ENCODE measurements at regions of chr12 and their contacts with region 1.

Region 1: DNA sequence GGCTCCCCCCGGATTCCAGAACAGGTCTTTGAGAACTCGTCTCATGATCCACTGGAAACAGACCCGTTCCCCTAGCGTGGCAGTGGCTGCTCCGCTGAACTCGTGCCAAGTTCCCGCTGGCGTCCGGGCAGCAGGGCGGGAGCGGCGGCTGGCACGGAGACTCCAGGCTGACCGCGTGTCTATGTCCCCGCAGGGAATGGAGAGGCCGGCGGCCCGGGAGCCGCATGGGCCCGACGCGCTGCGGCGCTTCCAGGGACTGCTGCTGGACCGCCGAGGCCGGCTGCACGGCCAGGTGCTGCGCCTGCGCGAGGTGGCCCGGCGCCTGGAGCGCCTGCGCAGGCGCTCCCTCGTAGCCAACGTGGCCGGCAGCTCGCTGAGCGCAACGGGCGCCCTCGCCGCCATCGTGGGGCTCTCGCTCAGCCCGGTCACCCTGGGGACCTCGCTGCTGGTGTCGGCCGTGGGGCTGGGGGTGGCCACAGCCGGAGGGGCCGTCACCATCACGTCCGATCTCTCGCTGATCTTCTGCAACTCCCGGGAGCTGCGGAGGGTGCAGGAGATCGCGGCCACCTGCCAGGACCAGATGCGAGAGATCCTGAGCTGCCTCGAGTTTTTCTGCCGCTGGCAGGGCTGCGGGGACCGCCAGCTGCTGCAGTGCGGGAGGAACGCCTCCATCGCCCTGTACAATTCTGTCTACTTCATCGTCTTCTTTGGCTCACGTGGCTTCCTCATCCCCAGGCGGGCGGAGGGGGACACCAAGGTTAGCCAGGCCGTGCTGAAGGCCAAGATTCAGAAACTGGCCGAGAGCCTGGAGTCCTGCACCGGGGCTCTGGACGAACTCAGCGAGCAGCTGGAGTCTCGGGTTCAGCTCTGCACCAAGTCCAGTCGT is 1.5 kb downstream of the APOLD1 start:
- DNase-seq: peak; percentile 47 to 90 (median 71)
- ATAC-seq: peak; percentile 90
- H3K4me3 ChIP-seq: peak overlapping the region; percentile 68 to 70
- H3K4me3 Mint-ChIP-seq: peak overlapping the region; percentile 77
- H3K27ac ChIP-seq: peak overlapping the region; percentile 72 to 73
- H3K27ac Mint-ChIP-seq: peak overlapping the region; percentile 87
- H3K4me1 ChIP-seq: peaks cover 16% of the 10 kb centered on the region
- H3K4me1 Mint-ChIP-seq: peaks cover 22% of the 10 kb centered on the region
- H3K27me3 ChIP-seq: no peaks in the 10 kb centered on the region
- H3K27me3 Mint-ChIP-seq: no peaks in the 10 kb centered on the region
- CTCF ChIP-seq: no peak

Region 2: DNA sequence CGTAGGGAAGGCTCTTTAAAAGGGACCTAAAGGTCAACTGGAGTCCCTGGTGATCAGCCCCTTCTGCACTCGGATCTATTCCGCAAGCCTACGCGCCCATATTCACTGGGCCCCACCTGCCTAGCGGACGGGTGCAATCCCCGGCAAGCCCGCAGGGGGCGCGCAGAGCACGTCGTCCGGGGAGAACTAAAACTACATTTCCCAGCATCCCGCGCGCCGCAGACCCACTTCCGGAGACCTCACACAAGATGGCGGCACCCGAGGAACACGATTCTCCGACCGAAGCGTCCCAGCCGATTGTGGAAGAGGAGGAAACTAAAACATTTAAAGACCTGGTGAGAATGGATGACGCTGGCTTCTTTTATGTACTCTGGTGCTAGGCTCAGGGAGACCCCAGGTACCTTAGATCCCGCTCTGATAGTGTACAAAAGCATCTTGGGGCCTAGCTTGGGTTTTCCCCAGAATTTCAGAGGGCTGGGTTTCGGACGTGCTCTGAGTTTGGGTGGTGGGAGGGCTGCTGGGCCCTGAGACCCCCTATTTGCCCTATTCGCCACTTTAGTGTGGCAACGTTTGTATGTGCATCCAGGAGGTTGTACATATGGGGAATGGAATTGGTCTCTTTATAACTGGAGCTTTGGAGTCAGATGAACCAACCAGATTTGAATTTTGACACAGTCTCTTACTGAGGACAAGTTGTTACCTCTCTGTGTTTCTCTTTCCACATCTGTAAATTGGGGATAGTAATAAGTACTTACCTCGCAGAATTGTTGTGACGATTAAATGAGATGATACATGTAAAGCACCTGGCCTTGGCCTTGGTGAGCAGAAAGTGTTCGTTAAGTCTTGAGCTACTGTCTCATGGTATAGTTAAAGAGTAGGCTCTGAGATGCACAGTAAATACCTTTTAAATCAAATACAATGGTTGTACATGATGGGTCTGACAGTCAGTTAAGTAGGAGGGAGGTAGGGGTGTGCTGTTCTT is 26.5 kb after region 1 on chr12 and contains the start of gene DDX47:
- CTCF ChIA-PET with region 1: interaction called, 91 read pairs
- POLR2A ChIA-PET with region 1: interaction called, 37 read pairs
- intact Hi-C with region 1: loop called (anchors 1 kb)
- DNase-seq: peak; percentile 94 to 99 (median 96)
- ATAC-seq: peak; percentile 88
- H3K4me3 ChIP-seq: peak within 1 kb of the TSS; percentile 88 to 98
- H3K4me3 Mint-ChIP-seq: peak within 1 kb of the TSS; percentile 95
- H3K27ac ChIP-seq: peak within 1 kb of the TSS; percentile 78 to 91
- H3K27ac Mint-ChIP-seq: peak within 1 kb of the TSS; percentile 96
- H3K4me1 ChIP-seq: peaks cover 34% of the 10 kb centered on the region
- H3K4me1 Mint-ChIP-seq: peaks cover 65% of the 10 kb centered on the region
- H3K27me3 ChIP-seq: no peaks in the 10 kb centered on the region
- H3K27me3 Mint-ChIP-seq: no peaks in the 10 kb centered on the region
- CTCF ChIP-seq: peak; percentile 93
- total RNA-seq, gene DDX47: 173 to 174 TPM

Region 3: DNA sequence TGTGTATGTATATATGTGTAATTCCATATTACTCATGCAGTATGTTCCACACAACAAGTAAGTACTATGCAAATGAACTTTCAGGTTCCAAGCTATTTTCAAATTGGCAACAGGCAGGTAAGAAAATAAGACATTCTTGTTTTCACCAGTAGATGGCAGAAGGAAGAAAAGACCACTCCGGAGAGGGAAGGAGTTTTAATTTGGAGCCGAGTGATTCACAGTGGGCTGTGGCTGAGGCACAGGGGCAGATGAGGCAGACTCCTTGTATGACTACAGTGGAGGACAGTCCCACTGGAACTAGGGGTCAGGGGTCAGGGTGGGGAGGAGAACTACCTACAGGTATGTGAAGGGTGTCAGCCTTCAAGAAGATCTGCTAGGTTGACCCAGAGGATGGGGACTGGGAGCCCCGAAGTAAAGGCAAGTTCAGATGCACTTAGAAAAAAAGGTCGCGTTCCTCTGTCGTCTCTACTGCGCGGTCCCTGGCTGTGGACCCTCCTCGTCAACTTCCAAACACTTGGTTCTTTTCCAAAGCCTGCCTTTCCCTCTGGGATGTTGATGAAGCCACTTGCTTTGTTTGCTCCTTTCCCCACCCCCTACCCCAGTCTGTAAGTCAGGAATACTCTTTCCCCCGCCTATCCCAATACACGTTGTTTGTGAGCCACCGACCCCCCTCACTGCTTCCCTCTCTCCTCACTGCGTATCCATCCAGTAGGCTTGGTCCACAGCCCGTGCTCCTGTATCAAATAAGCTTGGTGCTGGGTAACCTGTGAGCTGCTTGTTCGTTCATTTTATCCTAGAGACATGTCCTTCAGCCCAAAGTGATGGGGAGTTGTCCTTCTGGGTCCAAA is 50.3 kb after region 1 on chr12:
- CTCF ChIA-PET with region 1: interaction called, 22 read pairs
- POLR2A ChIA-PET with region 1: no interaction called
- intact Hi-C with region 1: no loop called
- DNase-seq: peak in 5 of 9 experiments; percentile 7 to 62 (median 25)
- ATAC-seq: peak; percentile 84
- H3K4me3 ChIP-seq: no peak overlapping the region
- H3K4me3 Mint-ChIP-seq: no peak overlapping the region
- H3K27ac ChIP-seq: no peak overlapping the region
- H3K27ac Mint-ChIP-seq: no peak overlapping the region
- H3K4me1 ChIP-seq: no peaks in the 10 kb centered on the region
- H3K4me1 Mint-ChIP-seq: peaks cover 23% of the 10 kb centered on the region
- H3K27me3 ChIP-seq: no peaks in the 10 kb centered on the region
- H3K27me3 Mint-ChIP-seq: no peaks in the 10 kb centered on the region
- CTCF ChIP-seq: peak; percentile 66

Region 4: GRCh38 chr12:12916135-12916944 is 129.4 kb after region 1 on chr12:
- CTCF ChIA-PET with region 1: interaction called, 9 read pairs
- POLR2A ChIA-PET with region 1: no interaction called
- intact Hi-C with region 1: loop called (anchors 2 to 5 kb)
- DNase-seq: peak; percentile 72 to 92 (median 82)
- ATAC-seq: peak; percentile 99
- H3K4me3 ChIP-seq: no peak overlapping the region
- H3K4me3 Mint-ChIP-seq: peak overlapping the region; percentile 4
- H3K27ac ChIP-seq: no peak overlapping the region
- H3K27ac Mint-ChIP-seq: no peak overlapping the region
- H3K4me1 ChIP-seq: peaks cover 4% of the 10 kb centered on the region
- H3K4me1 Mint-ChIP-seq: peaks cover 9% of the 10 kb centered on the region
- H3K27me3 ChIP-seq: peaks cover 0 to 7% of the 10 kb centered on the region in 2 experiments
- H3K27me3 Mint-ChIP-seq: peaks cover 19% of the 10 kb centered on the region
- CTCF ChIP-seq: peak; percentile 82

Region 5: GRCh38 chr12:12999959-13000615 is 213.1 kb after region 1 on chr12 and contains the start of gene HEBP1:
- CTCF ChIA-PET with region 1: interaction called, 3 read pairs
- POLR2A ChIA-PET with region 1: no interaction called
- intact Hi-C with region 1: loop called in 1 of 2 experiments (anchors 5 kb)
- DNase-seq: peak; percentile 90 to 98 (median 96)
- ATAC-seq: peak; percentile 95
- H3K4me3 ChIP-seq: peak within 1 kb of the TSS; percentile 84 to 85
- H3K4me3 Mint-ChIP-seq: peak within 1 kb of the TSS; percentile 96
- H3K27ac ChIP-seq: peak within 1 kb of the TSS; percentile 41 to 55
- H3K27ac Mint-ChIP-seq: peak within 1 kb of the TSS; percentile 82
- H3K4me1 ChIP-seq: peaks cover 20% of the 10 kb centered on the region
- H3K4me1 Mint-ChIP-seq: peaks cover 29% of the 10 kb centered on the region
- H3K27me3 ChIP-seq: peaks cover 0 to 4% of the 10 kb centered on the region in 2 experiments
- H3K27me3 Mint-ChIP-seq: peaks cover 6% of the 10 kb centered on the region
- CTCF ChIP-seq: no peak
- total RNA-seq, gene HEBP1: 4.6 to 5.6 TPM

Region 6: DNA sequence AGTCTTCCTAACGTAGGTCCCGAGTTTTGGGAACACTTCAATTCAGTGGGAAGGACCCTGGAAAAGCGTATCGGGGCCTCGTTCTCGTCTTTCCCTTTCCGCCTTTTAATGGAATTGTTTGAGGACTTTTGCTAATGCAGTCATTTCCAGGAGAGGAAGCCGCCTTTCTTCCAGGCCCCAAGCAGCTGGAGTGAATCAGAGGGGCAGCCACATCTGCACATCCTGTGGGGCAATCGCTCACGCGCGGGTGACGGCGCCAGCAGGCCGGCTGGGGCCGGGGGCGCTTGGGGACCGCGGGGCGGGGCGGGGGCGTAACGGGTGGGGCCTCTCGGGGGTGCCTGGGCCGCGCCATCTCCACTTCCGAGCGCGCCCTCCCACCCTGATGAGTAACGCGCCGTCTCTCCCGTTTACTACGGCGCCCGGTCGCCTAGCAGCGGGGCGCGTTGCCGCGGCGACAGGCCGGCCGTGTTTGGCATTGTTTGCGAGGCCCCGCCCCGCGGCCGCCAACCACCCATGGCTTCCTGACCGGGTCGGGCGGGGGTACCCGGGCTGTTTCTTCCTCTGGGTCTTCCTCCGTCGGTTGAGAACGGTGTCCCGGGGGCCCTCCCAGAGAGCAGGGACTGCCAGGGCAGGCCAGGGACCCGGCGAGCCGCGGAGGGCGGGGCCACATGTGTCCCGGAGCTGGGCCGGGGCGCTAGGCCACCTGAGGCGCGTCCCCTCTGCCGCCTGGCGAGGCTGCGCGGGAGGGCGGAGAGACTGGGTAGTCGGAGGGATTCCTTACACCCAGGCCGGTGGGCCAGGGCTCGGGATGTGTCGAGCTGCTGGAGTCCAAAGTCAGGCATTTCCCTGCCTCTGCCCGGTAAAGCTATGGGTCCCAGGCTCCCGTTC is 314.2 kb after region 1 on chr12:
- CTCF ChIA-PET with region 1: interaction called, 3 read pairs
- POLR2A ChIA-PET with region 1: no interaction called
- intact Hi-C with region 1: loop called (anchors 1 to 5 kb)
- DNase-seq: peak; percentile 86 to 97 (median 93)
- ATAC-seq: peak; percentile 87
- H3K4me3 ChIP-seq: peak overlapping the region; percentile 55 to 77
- H3K4me3 Mint-ChIP-seq: peak overlapping the region; percentile 81
- H3K27ac ChIP-seq: peak overlapping the region; percentile 83 to 95
- H3K27ac Mint-ChIP-seq: peak overlapping the region; percentile 89
- H3K4me1 ChIP-seq: peaks cover 27% of the 10 kb centered on the region
- H3K4me1 Mint-ChIP-seq: peaks cover 36% of the 10 kb centered on the region
- H3K27me3 ChIP-seq: no peaks in the 10 kb centered on the region
- H3K27me3 Mint-ChIP-seq: no peaks in the 10 kb centered on the region
- CTCF ChIP-seq: no peak

Measured in CD8-positive, alpha-beta T cell (primary cell).